Right cardiac atrium (tissue), 5 donors: ENCODE measurements at regions of chr14 and their contacts with region 1.

Region 1: GRCh38 chr14:61894452-61895077 is 132.3 kb downstream of the SNAPC1 start:
- DNase-seq: peak; percentile 62 to 83 (median 73)
- ATAC-seq: peak; percentile 39 to 53
- H3K4me3 ChIP-seq: no peak overlapping the region
- H3K27ac ChIP-seq: no peak overlapping the region
- H3K4me1 ChIP-seq: no peaks in the 10 kb centered on the region
- H3K27me3 ChIP-seq: no peaks in the 10 kb centered on the region

Region 2: DNA sequence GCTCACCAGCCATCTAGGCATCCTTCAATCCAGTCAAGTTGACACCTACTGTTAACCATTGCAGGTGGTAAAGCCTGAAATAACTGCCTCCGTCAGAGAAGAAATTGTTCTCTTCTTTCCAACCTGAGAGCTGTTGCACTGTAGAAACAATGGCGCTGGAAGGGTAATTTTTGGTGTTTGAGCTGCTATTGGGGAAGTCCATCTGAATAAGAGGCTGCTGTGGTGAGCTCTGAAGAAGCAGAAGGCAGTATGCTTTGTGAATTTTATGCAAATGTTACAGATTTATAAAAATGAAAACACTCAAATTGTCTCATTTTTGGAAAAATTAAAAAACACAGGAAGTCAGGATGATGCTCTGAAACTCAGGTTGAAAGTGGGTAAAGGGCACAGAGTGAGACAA is 72.1 kb before region 1 on chr14:
- intact Hi-C with region 1: no loop called
- DNase-seq: no peak
- ATAC-seq: no peak
- H3K4me3 ChIP-seq: no peak overlapping the region
- H3K27ac ChIP-seq: no peak overlapping the region
- H3K4me1 ChIP-seq: no peaks in the 10 kb centered on the region
- H3K27me3 ChIP-seq: no peaks in the 10 kb centered on the region

Region 3: DNA sequence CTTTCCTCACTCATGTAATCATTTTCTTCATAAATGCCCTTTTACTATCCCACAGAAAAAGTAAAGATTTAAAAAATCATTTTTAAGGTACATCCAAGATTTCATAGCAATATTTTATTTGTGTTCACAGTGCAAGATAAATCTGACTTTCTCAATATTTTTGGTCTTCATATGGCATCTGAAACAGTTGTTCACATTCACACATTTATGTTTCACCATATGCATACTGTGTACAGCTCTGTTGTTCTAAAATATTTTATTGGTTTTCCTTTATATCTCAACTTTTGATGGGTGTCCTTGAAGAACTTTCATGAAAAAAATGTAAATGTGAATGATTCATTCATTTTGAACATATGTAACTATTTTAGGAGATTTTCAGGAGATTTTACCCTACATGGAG is 216.4 kb after region 1 on chr14:
- intact Hi-C with region 1: no loop called
- DNase-seq: no peak
- ATAC-seq: no peak
- H3K4me3 ChIP-seq: no peak overlapping the region
- H3K27ac ChIP-seq: no peak overlapping the region
- H3K4me1 ChIP-seq: no peaks in the 10 kb centered on the region
- H3K27me3 ChIP-seq: no peaks in the 10 kb centered on the region

Region 4: DNA sequence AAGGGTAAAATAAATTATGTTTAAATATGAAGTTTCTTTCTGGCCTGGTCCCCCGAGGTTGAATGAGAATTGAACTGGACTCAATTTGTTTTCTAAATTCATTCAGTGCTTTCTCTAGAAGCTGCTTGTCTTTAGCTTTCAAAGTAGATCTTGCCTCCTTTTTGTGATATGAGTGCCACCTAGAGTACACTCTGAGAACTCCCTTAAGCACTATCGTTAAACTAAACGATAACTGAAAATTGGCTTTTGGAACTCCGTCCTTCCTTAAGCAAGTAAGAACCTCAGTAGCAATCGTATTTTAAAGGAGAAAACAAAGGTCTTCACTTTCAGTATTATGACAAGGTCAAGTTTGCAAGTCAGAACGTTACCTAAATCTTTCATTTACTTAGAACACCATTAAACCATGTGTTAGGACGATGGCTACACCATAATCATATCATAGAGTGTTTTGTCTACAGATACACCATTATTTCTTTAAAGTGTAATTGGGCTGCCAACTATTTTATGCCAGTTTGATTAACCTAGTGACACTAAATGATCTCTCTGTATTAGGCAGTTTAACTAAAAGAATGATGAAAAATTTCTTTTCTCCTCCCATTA is 232.4 kb after region 1 on chr14:
- intact Hi-C with region 1: loop called in 2 of 4 experiments (anchors 5 to 10 kb)
- DNase-seq: no peak
- ATAC-seq: peak; percentile 51 to 64
- H3K4me3 ChIP-seq: no peak overlapping the region
- H3K27ac ChIP-seq: no peak overlapping the region
- H3K4me1 ChIP-seq: no peaks in the 10 kb centered on the region
- H3K27me3 ChIP-seq: peaks cover 2% of the 10 kb centered on the region